PC-3 (cell line): ENCODE measurements at regions of chr2 and their contacts with region 1.

Region 1: GRCh38 chr2:63888490-63889402 is 47.0 kb downstream of the UGP2 start:
- DNase-seq: peak; percentile 78
- ATAC-seq: peak; percentile 37
- H3K4me3 ChIP-seq: no peak overlapping the region
- H3K27ac ChIP-seq: no peak overlapping the region
- H3K4me1 ChIP-seq: peaks cover 31% of the 10 kb centered on the region
- H3K27me3 ChIP-seq: no peaks in the 10 kb centered on the region
- CTCF ChIP-seq: peak; percentile 96

Region 2: DNA sequence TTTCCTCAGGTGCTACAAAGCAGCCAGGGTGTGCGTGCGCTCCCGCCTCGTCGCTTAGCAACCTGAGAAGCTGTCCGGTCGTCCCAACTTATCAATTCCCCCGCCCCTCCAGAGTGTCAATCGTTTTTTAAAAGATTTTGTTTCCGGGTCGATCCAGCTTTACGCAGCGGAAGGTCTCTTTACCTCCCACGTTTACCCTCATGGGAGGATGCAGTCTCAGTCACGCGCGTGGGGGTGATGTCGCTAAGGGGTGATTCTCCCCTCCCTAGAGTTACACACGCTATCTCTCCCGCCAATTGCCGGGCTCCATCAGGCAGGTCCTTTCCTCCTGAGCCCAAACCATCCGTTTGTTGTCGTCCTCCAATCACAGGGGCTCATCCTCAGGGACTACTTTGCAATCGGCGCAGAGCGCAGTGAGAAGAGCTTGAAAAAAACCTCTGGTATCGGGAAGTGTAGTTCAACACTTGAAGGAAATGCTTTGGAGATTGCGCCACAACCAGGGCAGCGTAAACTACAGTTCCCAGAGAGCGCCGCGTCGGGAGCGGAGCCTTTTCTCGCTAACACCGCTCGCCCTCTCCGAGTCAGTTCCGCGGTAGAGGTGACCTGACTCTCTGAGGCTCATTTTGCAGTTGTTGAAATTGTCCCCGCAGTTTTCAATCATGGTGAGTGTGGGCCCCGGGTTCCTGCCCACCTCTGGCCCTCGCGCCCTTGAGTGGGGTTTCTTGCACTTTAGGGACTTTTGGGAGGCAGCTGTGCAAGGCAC is 300.2 kb before region 1 on chr2 and contains the starts of genes MDH1 and WDPCP:
- CTCF ChIA-PET with region 1: no interaction called
- POLR2A ChIA-PET with region 1: no interaction called
- intact Hi-C with region 1: loop called (anchors 5 kb)
- DNase-seq: peak; percentile 99
- ATAC-seq: peak; percentile 87
- H3K4me3 ChIP-seq: peak within 1 kb of the TSS; percentile 82
- H3K27ac ChIP-seq: peak within 1 kb of the TSS; percentile 73
- H3K4me1 ChIP-seq: peaks cover 29% of the 10 kb centered on the region
- H3K27me3 ChIP-seq: no peaks in the 10 kb centered on the region
- CTCF ChIP-seq: no peak
- total RNA-seq, gene MDH1: 249 and 304 TPM in 2 replicates
- total RNA-seq, gene WDPCP: 4.0 and 6.3 TPM in 2 replicates

Region 3: GRCh38 chr2:63692002-63692606 is 196.6 kb before region 1 on chr2:
- CTCF ChIA-PET with region 1: interaction called, 4 read pairs
- POLR2A ChIA-PET with region 1: no interaction called
- intact Hi-C with region 1: loop called (anchors 1 kb)
- DNase-seq: peak; percentile 74
- ATAC-seq: peak; percentile 45
- H3K4me3 ChIP-seq: no peak overlapping the region
- H3K27ac ChIP-seq: no peak overlapping the region
- H3K4me1 ChIP-seq: peaks cover 11% of the 10 kb centered on the region
- H3K27me3 ChIP-seq: no peaks in the 10 kb centered on the region
- CTCF ChIP-seq: peak; percentile 72

Region 4: DNA sequence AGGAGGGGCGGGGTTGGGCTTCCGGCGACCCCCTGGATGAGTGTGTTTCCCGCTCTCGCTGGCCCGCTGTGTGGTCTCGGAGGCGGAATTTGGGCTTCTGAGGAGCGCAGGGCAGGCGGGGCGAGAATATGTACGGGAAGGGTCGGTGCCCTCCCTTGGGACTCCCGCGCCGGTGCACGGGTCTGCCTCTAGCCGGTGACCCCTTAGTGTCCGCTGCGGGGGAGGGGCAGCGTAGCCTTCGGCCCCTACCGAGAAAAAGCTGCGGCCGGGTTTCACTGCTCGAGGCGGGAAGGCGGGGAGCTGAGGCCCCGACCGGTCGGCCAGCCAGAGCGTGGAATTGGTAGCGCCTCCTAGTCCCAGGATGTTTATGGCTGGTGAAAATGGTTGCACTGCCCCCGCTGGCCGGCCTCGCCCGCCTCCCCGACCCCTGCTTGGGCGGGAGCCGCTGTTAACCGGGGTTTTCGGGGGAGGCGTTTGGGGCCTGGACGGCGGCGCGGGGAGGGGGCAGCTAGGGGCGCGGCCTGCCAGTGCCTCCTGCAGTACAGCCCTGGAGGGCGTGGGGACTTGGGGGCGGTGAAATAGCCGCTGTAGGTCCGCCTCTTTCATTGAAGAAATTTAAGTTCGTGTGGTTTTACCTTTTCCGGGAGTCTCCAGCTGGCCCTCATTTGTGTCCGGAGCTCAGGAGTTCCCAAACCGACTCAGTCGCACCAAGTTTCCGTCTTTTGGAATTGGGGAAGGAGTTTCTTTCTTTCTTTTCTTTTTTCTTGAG is 47.3 kb before region 1 on chr2 and contains the start of gene UGP2:
- CTCF ChIA-PET with region 1: no interaction called
- POLR2A ChIA-PET with region 1: no interaction called
- intact Hi-C with region 1: loop called (anchors 1 kb)
- DNase-seq: peak; percentile 91
- ATAC-seq: peak; percentile 76
- H3K4me3 ChIP-seq: peak within 1 kb of the TSS; percentile 86
- H3K27ac ChIP-seq: peak within 1 kb of the TSS; percentile 81
- H3K4me1 ChIP-seq: peaks cover 28% of the 10 kb centered on the region
- H3K27me3 ChIP-seq: no peaks in the 10 kb centered on the region
- CTCF ChIP-seq: peak; percentile 42
- total RNA-seq, gene UGP2: 48.4 and 55.8 TPM in 2 replicates

Region 5: DNA sequence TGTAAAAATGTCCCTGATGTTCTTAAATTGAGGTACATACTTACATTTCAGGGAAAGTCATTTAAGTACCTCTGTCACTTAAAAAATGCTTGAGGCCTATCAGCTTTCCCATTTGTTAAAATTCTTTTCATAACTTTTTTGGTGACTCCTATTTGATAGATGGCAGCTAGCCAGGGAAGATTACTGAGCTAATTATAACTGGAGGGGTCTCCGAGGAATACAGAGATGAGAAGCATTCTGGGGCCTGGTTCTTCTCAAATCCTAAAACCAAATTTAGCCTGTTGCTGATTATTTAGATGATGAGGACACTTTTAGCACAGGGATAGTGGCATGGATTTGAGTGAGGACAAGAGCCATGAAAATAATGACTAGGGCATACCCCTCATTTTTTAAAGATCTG is 42.3 kb before region 1 on chr2:
- CTCF ChIA-PET with region 1: no interaction called
- POLR2A ChIA-PET with region 1: no interaction called
- intact Hi-C with region 1: loop called (anchors 1 kb)
- DNase-seq: no peak
- ATAC-seq: no peak
- H3K4me3 ChIP-seq: no peak overlapping the region
- H3K27ac ChIP-seq: no peak overlapping the region
- H3K4me1 ChIP-seq: peaks cover 27% of the 10 kb centered on the region
- H3K27me3 ChIP-seq: no peaks in the 10 kb centered on the region
- CTCF ChIP-seq: no peak

Region 6: GRCh38 chr2:63861220-63861822 is 27.4 kb before region 1 on chr2:
- CTCF ChIA-PET with region 1: no interaction called
- POLR2A ChIA-PET with region 1: no interaction called
- intact Hi-C with region 1: loop called (anchors 2 kb)
- DNase-seq: peak; percentile 64
- ATAC-seq: peak; percentile 28; the same call in 1 of the 2 replicates
- H3K4me3 ChIP-seq: no peak overlapping the region
- H3K27ac ChIP-seq: no peak overlapping the region
- H3K4me1 ChIP-seq: peaks cover 30% of the 10 kb centered on the region
- H3K27me3 ChIP-seq: no peaks in the 10 kb centered on the region
- CTCF ChIP-seq: peak; percentile 72

Region 7: DNA sequence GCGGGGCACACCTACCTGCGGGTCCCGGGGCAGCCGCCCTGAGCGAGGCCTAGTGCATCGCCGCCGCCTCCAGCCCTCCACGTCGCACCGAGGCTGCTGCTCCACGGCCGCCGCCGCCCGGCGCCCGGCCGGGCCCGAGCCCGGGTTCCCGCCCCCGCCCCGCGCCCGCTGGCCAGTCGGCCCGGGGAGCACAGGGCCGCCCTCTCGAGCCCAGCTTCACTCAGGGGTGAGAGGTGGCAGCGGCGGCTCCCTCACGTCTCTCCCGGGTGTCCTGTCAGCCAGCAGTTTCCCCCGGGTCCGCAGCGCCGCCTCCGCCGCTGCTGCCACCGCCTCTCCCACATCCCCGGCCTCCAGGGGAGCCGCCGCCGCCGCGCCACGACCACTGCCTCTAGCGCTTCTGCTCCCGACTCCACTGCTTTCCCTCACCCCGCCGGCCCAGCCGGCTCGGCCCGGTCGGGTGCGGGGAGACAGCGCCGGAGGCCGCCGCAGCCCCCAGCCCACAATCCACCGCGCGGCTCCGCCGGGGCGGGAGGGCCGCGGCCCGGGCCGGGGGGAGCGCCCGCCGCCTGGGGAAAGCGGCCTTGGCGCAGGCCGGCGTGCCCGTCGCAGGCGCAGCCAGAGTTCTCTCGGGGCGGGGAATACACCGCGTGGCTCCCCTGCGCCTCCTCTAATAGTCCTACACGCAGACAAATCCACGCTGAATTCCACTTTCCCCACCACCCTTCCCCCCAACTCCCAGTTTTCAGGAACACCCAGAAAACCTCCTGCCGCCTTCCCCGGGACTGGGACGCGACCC is 130.4 kb after region 1 on chr2 and contains the start of gene VPS54:
- CTCF ChIA-PET with region 1: no interaction called
- POLR2A ChIA-PET with region 1: no interaction called
- intact Hi-C with region 1: loop called (anchors 5 kb)
- DNase-seq: peak; percentile 60
- ATAC-seq: peak; percentile 75
- H3K4me3 ChIP-seq: peak within 1 kb of the TSS; percentile 91
- H3K27ac ChIP-seq: peak within 1 kb of the TSS; percentile 39
- H3K4me1 ChIP-seq: peaks cover 23% of the 10 kb centered on the region
- H3K27me3 ChIP-seq: no peaks in the 10 kb centered on the region
- CTCF ChIP-seq: no peak
- total RNA-seq, gene VPS54: 17.9 and 18.6 TPM in 2 replicates

Region 8: GRCh38 chr2:64062829-64063228 is 174.1 kb after region 1 on chr2:
- CTCF ChIA-PET with region 1: no interaction called
- POLR2A ChIA-PET with region 1: no interaction called
- intact Hi-C with region 1: no loop called
- DNase-seq: peak; percentile 70
- ATAC-seq: peak; percentile 77
- H3K4me3 ChIP-seq: no peak overlapping the region
- H3K27ac ChIP-seq: no peak overlapping the region
- H3K4me1 ChIP-seq: peaks cover 15% of the 10 kb centered on the region
- H3K27me3 ChIP-seq: no peaks in the 10 kb centered on the region
- CTCF ChIP-seq: no peak